A673 (cell line): ENCODE measurements at regions of chr5 and their contacts with region 1.

Region 1: GRCh38 chr5:123303802-123304201 is 119.4 kb downstream of the CEP120 start:
- DNase-seq: no peak
- H3K4me3 ChIP-seq: no peak overlapping the region
- H3K27ac ChIP-seq: no peak overlapping the region
- H3K4me1 ChIP-seq: no peaks in the 10 kb centered on the region
- H3K27me3 ChIP-seq: peaks cover 5% of the 10 kb centered on the region
- CTCF ChIP-seq: no peak

Region 2: GRCh38 chr5:122835681-122836080 is 468.1 kb before region 1 on chr5:
- CTCF ChIA-PET with region 1: no interaction called
- POLR2A ChIA-PET with region 1: no interaction called
- intact Hi-C with region 1: no loop called
- DNase-seq: peak; percentile 10
- H3K4me3 ChIP-seq: no peak overlapping the region
- H3K27ac ChIP-seq: no peak overlapping the region
- H3K4me1 ChIP-seq: peaks cover 7% of the 10 kb centered on the region
- H3K27me3 ChIP-seq: no peaks in the 10 kb centered on the region
- CTCF ChIP-seq: no peak

Region 3: GRCh38 chr5:123598028-123598689 is 294.4 kb after region 1 on chr5:
- CTCF ChIA-PET with region 1: no interaction called
- POLR2A ChIA-PET with region 1: no interaction called
- intact Hi-C with region 1: loop called (anchors 5 kb)
- DNase-seq: no peak
- H3K4me3 ChIP-seq: no peak overlapping the region
- H3K27ac ChIP-seq: no peak overlapping the region
- H3K4me1 ChIP-seq: no peaks in the 10 kb centered on the region
- H3K27me3 ChIP-seq: no peaks in the 10 kb centered on the region
- CTCF ChIP-seq: no peak

Region 4: GRCh38 chr5:123651234-123651633 is 347.4 kb after region 1 on chr5:
- CTCF ChIA-PET with region 1: no interaction called
- POLR2A ChIA-PET with region 1: no interaction called
- intact Hi-C with region 1: no loop called
- DNase-seq: no peak
- H3K4me3 ChIP-seq: no peak overlapping the region
- H3K27ac ChIP-seq: no peak overlapping the region
- H3K4me1 ChIP-seq: no peaks in the 10 kb centered on the region
- H3K27me3 ChIP-seq: peaks cover 3% of the 10 kb centered on the region
- CTCF ChIP-seq: no peak

Region 5: DNA sequence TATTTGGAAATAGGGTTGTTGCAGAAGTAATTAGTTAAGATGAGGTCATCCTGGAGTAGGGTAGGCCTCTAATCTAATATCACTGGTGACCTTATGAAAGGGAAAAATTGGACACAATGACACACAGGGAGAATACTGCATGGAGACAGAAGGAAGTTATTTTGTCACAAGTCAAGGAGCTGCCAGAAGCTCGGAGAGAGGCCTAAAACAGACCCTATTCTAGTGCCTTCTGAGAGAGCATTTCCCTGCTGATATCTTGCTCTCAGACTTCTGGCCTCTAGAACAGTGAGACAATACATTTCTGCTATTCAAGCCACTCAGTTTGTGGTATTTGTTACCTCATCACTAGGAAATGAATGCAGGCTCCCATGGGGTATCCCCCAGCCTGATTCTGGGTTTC is 541.1 kb after region 1 on chr5:
- CTCF ChIA-PET with region 1: no interaction called
- POLR2A ChIA-PET with region 1: no interaction called
- intact Hi-C with region 1: no loop called
- DNase-seq: no peak
- H3K4me3 ChIP-seq: no peak overlapping the region
- H3K27ac ChIP-seq: no peak overlapping the region
- H3K4me1 ChIP-seq: no peaks in the 10 kb centered on the region
- H3K27me3 ChIP-seq: no peaks in the 10 kb centered on the region
- CTCF ChIP-seq: no peak